ENCODE measurements at regions of chr5 and their contacts with region 1.

Region 1: DNA sequence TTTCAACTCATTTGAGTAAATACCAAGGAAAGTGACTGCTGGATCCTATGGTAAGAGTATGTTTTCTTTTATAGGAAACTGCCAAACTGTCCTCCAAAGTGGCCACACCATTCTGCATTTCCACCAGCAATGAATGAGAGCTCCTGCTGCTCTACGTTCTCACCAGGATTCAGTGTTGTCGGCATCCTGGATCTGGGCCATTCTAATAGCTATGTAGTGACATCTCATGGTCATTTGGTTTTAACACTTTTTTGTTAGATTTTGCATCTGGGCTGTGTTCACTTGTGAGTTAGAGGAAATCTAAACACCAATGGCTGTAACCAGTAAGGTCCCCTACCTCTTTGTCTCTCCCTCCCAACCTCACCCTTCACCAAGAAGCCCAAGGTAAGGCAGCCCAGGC is 115.9 kb downstream of the ATPSCKMT start:
- DNase-seq: peak in 1 of 2 experiments; percentile 39
- H3K4me3 ChIP-seq: no peak overlapping the region
- H3K27ac ChIP-seq: no peak overlapping the region
- H3K4me1 ChIP-seq: no peaks in the 10 kb centered on the region
- H3K27me3 ChIP-seq: no peaks in the 10 kb centered on the region
- CTCF ChIP-seq: peak in 2 of 3 experiments; percentile 11 to 18; a peak in 2 of 4 replicates
- EP300 ChIP-seq: no peak
- POLR2A ChIP-seq: no peak
- RAD21 ChIP-seq: peak; percentile 55 to 66

Region 2: GRCh38 chr5:10085185-10085584 is 48.6 kb before region 1 on chr5:
- CTCF ChIA-PET with region 1: no interaction called
- POLR2A ChIA-PET with region 1: no interaction called
- DNase-seq: no peak
- H3K4me3 ChIP-seq: no peak overlapping the region
- H3K27ac ChIP-seq: no peak overlapping the region
- H3K4me1 ChIP-seq: no peaks in the 10 kb centered on the region; a peak in 1 of 7 replicates
- H3K27me3 ChIP-seq: peaks cover 0 to 1% (median 0%) of the 10 kb centered on the region in 4 experiments; a peak in 1 of 7 replicates
- CTCF ChIP-seq: no peak
- EP300 ChIP-seq: no peak
- POLR2A ChIP-seq: no peak
- RAD21 ChIP-seq: no peak

Region 3: DNA sequence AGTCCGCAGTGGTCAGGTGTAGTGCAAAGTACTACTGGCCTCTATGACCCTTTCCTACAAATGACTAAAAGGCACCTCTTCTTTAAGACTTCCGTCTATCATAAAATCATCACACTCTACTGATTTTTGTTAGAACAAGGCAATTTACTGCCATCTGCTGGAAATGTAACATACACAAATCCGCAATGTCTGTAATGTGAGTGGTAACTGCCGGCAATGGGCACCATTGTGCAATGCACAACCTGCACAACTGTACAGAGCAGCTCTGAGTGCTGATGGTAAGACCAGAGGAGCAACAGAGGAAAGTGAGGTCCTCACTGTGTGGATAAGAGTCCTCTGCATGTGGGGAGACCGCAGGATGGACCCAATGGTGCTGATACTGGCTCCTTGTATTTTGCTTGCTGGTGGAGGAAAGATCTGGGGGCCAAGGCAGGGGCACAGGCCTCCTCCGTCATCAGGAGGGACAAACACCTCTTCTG is 12.1 kb after region 1 on chr5:
- CTCF ChIA-PET with region 1: interaction called, 11 read pairs
- POLR2A ChIA-PET with region 1: no interaction called
- DNase-seq: no peak
- H3K4me3 ChIP-seq: no peak overlapping the region
- H3K27ac ChIP-seq: no peak overlapping the region
- H3K4me1 ChIP-seq: no peaks in the 10 kb centered on the region
- H3K27me3 ChIP-seq: no peaks in the 10 kb centered on the region
- CTCF ChIP-seq: peak in 2 of 3 experiments; percentile 14 to 43; a peak in 2 of 4 replicates
- EP300 ChIP-seq: no peak
- POLR2A ChIP-seq: no peak
- RAD21 ChIP-seq: peak; percentile 56 to 60

Region 4: GRCh38 chr5:10424124-10424731 is 290.4 kb after region 1 on chr5:
- CTCF ChIA-PET with region 1: no interaction called
- POLR2A ChIA-PET with region 1: no interaction called
- DNase-seq: no peak
- H3K4me3 ChIP-seq: no peak overlapping the region
- H3K27ac ChIP-seq: no peak overlapping the region
- H3K4me1 ChIP-seq: peaks cover 0 to 2% (median 0%) of the 10 kb centered on the region in 4 experiments; a peak in 1 of 7 replicates
- H3K27me3 ChIP-seq: no peaks in the 10 kb centered on the region
- CTCF ChIP-seq: peak in 2 of 3 experiments; percentile 60 to 62; a peak in 3 of 4 replicates
- EP300 ChIP-seq: no peak
- POLR2A ChIP-seq: no peak
- RAD21 ChIP-seq: peak; percentile 65 to 70

Measured in H1 (cell line).